ENCODE measurements at regions of chr1 and their contacts with region 1.

Region 1: GRCh38 chr1:113811888-113812660 is at the start of gene RSBN1:
- DNase-seq: peak; percentile 99
- ATAC-seq: peak; percentile 94
- H3K4me3 ChIP-seq: peak within 1 kb of the TSS; percentile 78 to 91 (median 83)
- H3K4me3 Mint-ChIP-seq: peak within 1 kb of the TSS; percentile 98
- H3K27ac ChIP-seq: peak within 1 kb of the TSS; percentile 86 to 93
- H3K27ac Mint-ChIP-seq: peak within 1 kb of the TSS; percentile 98
- H3K4me1 ChIP-seq: peaks cover 27 to 28% of the 10 kb centered on the region in 2 donors
- H3K4me1 Mint-ChIP-seq: peaks cover 39% of the 10 kb centered on the region
- H3K27me3 ChIP-seq: no peaks in the 10 kb centered on the region
- H3K27me3 Mint-ChIP-seq: no peaks in the 10 kb centered on the region
- CTCF ChIP-seq: peak; percentile 2
- total RNA-seq, gene RSBN1: 40.2 and 41.5 TPM in 2 replicates

Region 2: DNA sequence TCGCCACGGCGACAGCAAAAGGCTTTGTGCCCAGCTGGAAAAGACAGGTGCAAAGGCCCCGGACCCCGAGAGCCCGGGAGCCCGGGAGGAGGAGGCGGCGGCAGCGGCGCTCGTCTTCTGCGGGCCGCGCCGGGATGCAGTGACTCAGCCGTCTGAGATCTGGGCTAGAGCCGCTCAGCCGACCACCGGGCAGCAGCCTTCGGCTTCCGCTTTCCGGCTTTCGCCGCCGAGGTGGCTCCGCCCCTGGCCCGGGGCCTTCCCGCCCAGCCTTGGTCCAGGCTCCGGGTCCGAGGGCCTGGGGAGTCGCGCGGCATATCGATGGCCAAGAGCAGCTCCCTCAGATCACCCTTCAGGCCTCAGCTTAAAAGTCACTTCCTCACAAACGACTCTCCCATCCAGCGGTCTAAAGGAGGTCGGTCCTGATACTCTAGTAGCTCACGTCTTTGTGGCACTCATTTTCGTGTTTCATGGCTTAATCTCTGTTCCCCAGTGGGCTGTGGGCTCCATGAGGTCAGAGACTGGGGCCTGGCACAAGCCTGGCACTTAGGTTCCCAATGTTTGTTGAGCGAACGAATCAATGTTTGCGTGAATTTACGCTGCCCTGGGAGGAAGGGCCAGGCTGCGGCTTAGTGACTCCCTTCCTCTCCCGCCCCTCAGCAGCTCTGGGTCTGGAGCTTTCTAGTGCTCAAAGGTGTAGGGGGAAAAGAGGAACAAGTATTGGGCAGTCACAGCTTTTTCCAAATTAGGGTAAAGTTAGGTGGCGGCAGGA is 52.6 kb before region 1 on chr1 and contains the start of gene PHTF1:
- CTCF ChIA-PET with region 1: interaction called, 7 read pairs
- POLR2A ChIA-PET with region 1: interaction called, 8 read pairs
- intact Hi-C with region 1: loop called (anchors 1 kb)
- DNase-seq: peak; percentile 80
- ATAC-seq: peak; percentile 84
- H3K4me3 ChIP-seq: peak within 1 kb of the TSS; percentile 76 to 93 (median 92)
- H3K4me3 Mint-ChIP-seq: peak within 1 kb of the TSS; percentile 99
- H3K27ac ChIP-seq: peak within 1 kb of the TSS; percentile 86 to 90
- H3K27ac Mint-ChIP-seq: peak within 1 kb of the TSS; percentile 99
- H3K4me1 ChIP-seq: peaks cover 6 to 20% of the 10 kb centered on the region in 2 donors
- H3K4me1 Mint-ChIP-seq: peaks cover 23% of the 10 kb centered on the region
- H3K27me3 ChIP-seq: no peaks in the 10 kb centered on the region
- H3K27me3 Mint-ChIP-seq: no peaks in the 10 kb centered on the region
- CTCF ChIP-seq: no peak
- total RNA-seq, gene PHTF1: 18.5 and 25.7 TPM in 2 replicates

Region 3: DNA sequence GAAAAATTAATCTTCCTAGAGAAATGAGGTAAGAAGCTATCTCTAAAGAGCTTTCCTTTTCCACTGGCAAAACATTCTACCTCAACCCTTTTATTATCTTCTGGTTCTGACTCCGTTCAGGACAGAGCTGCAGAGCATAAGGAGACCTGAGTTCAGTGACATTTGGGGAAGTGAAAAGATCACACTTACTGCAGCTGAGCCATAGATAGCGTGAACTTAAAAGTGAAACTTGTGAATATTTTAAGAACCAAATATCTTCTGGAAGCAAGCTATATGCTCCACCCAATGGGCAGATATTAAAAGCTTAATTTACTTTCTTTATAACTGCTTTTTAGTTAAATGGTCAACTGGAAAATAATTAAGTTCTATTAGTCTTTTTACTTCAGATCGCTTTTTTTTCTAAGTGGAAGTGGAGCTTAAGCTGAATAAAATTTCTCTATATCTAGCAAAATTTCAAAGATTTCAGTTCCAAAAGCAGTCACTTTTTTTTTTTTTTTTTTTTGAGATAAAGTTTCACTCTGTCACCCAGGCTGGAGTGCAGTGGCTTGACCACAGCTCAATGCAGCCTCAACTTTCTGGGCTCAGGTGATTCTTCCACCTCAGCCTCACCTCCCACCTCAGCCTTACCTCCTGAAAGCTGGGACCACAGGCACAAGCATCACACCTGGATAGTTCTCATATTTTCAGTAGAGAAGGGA is 47.6 kb after region 1 on chr1:
- CTCF ChIA-PET with region 1: no interaction called
- POLR2A ChIA-PET with region 1: no interaction called
- intact Hi-C with region 1: loop called (anchors 1 kb)
- DNase-seq: peak; percentile 79
- ATAC-seq: peak; percentile 80
- H3K4me3 ChIP-seq: peak overlapping the region; percentile 5 to 58 (median 31)
- H3K4me3 Mint-ChIP-seq: peak overlapping the region; percentile 72
- H3K27ac ChIP-seq: peak overlapping the region; percentile 73 to 80
- H3K27ac Mint-ChIP-seq: peak overlapping the region; percentile 92
- H3K4me1 ChIP-seq: peaks cover 58 to 60% of the 10 kb centered on the region in 2 donors
- H3K4me1 Mint-ChIP-seq: peaks cover 58% of the 10 kb centered on the region
- H3K27me3 ChIP-seq: no peaks in the 10 kb centered on the region
- H3K27me3 Mint-ChIP-seq: no peaks in the 10 kb centered on the region
- CTCF ChIP-seq: no peak

Region 4: DNA sequence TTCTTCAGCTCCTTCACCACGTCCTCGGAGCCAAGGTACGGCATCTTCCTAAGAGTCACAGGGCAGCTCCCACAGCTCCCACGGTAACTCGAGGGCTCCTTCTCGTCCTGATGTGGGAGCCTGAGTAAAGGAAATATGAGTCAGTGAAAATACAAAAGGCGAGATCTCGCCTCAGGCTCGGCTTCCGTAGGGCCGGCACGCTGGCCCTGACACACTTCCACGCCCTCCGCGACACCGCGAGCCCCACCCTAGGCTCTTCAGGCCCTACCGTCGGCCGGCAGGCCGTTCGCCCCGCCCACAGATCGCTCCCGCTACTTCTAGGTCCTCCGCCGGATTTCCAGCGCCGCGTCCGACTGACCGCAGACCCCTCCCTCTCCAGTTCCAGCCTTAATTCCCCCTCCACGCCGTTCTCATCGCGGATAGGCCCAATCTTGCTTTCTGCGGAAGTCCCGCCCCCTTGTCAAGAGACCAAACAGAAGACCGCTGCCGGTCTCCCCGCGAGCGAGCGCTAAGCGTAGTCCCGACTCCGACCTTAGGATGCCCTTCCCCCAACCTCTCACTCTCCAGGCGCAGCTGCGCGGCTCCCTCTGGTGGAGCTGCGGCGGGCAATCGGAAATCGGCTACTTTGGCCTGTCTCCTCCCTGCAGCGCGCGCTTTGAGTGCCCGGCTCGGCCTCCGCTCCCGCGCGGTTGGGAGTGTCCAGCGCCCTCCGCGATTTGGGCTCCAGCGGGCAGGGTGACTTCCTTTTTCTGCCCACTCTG is 92.8 kb after region 1 on chr1 and contains the starts of genes AP4B1 and DCLRE1B:
- CTCF ChIA-PET with region 1: no interaction called
- POLR2A ChIA-PET with region 1: interaction called, 8 read pairs
- intact Hi-C with region 1: loop called (anchors 1 kb)
- DNase-seq: peak; percentile 99
- ATAC-seq: peak; percentile 90
- H3K4me3 ChIP-seq: peak within 1 kb of the TSS; percentile 87 to 98 (median 92)
- H3K4me3 Mint-ChIP-seq: peak within 1 kb of the TSS; percentile 92
- H3K27ac ChIP-seq: peak within 1 kb of the TSS; percentile 87 to 93
- H3K27ac Mint-ChIP-seq: peak within 1 kb of the TSS; percentile 99
- H3K4me1 ChIP-seq: peaks cover 32 to 39% of the 10 kb centered on the region in 2 donors
- H3K4me1 Mint-ChIP-seq: peaks cover 43% of the 10 kb centered on the region
- H3K27me3 ChIP-seq: no peaks in the 10 kb centered on the region
- H3K27me3 Mint-ChIP-seq: no peaks in the 10 kb centered on the region
- CTCF ChIP-seq: peak; percentile 71
- total RNA-seq, gene AP4B1: 51.5 and 52.2 TPM in 2 replicates
- total RNA-seq, gene DCLRE1B: 4.3 and 4.8 TPM in 2 replicates

Region 5: DNA sequence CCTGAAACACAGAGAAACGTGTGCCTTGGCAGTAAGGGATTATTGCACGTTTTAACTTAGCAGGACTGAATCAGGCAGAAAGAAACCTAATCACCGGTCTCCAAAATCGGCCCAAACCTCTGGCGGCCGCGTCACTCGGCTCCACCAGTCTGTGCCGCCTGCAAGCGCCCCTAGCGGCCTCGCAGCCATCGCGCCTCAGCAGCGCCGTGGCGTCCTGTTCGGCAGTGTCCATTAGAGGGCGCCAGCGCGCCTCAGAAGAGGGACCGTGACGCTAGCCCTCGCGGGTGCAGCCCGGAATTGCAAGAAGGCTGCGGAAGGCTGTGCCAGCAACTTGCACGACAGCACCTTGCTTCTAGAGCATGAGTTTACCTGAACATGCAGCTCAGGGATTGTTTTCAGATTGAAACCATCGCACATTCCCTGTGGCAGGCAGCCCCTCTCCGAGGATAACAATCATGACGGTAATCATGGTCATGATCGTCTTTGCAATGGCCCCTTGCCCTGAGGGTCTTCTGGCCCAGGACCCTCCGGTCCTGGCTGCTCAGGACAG is 534.5 kb after region 1 on chr1:
- CTCF ChIA-PET with region 1: no interaction called
- POLR2A ChIA-PET with region 1: no interaction called
- intact Hi-C with region 1: loop called (anchors 5 kb)
- DNase-seq: peak; percentile 98
- ATAC-seq: peak; percentile 100
- H3K4me3 ChIP-seq: peak overlapping the region; percentile 24 to 61 (median 53)
- H3K4me3 Mint-ChIP-seq: peak overlapping the region; percentile 97
- H3K27ac ChIP-seq: no peak overlapping the region
- H3K27ac Mint-ChIP-seq: peak overlapping the region; percentile 62
- H3K4me1 ChIP-seq: peaks cover 0 to 13% of the 10 kb centered on the region in 2 donors
- H3K4me1 Mint-ChIP-seq: peaks cover 10% of the 10 kb centered on the region
- H3K27me3 ChIP-seq: peaks cover 0 to 3% (median under 1%) of the 10 kb centered on the region in 4 experiments
- H3K27me3 Mint-ChIP-seq: peaks cover 14% of the 10 kb centered on the region
- CTCF ChIP-seq: peak; percentile 100

Region 6: DNA sequence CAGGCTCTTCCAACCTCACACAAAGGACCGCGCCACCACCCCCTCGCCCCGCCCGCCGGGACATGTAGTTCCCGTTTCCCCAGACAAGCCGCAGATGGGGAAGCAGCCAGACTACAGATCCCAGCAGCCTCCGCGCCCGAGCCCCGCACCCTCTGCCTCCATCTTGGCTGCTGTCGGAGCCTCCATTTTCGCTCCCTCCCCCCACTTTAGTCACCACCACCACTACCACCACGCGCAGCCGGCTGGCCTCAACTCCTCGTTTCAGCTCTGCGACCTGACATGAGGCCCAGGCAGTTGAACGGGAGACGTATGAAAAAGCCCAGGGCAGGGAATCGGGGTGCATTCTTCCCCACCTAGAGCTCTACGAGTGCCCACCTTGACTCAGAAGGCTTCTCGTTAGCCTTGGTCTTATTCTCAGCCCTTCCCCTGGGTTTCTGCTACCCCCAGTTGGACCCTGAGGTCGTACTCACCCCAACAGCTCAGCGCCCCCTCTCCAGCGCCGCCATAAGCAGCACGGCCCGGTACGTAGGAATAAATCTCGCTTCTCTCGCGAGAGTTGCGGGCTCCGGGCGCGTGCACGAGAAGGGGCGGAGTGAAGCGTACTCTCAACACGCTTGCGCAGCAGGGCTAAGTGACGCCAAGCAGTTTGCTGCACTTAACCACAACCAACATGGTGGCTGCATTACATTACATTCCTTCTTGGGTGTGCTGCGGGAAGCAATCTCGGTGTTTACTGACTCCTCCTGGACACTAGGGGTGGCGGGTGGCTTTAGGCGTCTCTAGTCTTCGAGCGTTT is 945.6 kb after region 1 on chr1 and contains the start of gene CSDE1:
- CTCF ChIA-PET with region 1: no interaction called
- POLR2A ChIA-PET with region 1: no interaction called
- intact Hi-C with region 1: loop called (anchors 1 kb)
- DNase-seq: peak; percentile 98
- ATAC-seq: peak; percentile 89
- H3K4me3 ChIP-seq: peak within 1 kb of the TSS; percentile 81 to 100 (median 100)
- H3K4me3 Mint-ChIP-seq: peak within 1 kb of the TSS; percentile 100
- H3K27ac ChIP-seq: peak within 1 kb of the TSS; percentile 99 to 100
- H3K27ac Mint-ChIP-seq: peak within 1 kb of the TSS; percentile 100
- H3K4me1 ChIP-seq: peaks cover 45 to 46% of the 10 kb centered on the region in 2 donors
- H3K4me1 Mint-ChIP-seq: peaks cover 56% of the 10 kb centered on the region
- H3K27me3 ChIP-seq: no peaks in the 10 kb centered on the region
- H3K27me3 Mint-ChIP-seq: no peaks in the 10 kb centered on the region
- CTCF ChIP-seq: no peak
- total RNA-seq, gene CSDE1: 443 and 454 TPM in 2 replicates

Measured in B cell (primary cell).